Heart right ventricle (tissue), 16 donors: ENCODE measurements at regions of chr2 and their contacts with region 1.

Region 1: DNA sequence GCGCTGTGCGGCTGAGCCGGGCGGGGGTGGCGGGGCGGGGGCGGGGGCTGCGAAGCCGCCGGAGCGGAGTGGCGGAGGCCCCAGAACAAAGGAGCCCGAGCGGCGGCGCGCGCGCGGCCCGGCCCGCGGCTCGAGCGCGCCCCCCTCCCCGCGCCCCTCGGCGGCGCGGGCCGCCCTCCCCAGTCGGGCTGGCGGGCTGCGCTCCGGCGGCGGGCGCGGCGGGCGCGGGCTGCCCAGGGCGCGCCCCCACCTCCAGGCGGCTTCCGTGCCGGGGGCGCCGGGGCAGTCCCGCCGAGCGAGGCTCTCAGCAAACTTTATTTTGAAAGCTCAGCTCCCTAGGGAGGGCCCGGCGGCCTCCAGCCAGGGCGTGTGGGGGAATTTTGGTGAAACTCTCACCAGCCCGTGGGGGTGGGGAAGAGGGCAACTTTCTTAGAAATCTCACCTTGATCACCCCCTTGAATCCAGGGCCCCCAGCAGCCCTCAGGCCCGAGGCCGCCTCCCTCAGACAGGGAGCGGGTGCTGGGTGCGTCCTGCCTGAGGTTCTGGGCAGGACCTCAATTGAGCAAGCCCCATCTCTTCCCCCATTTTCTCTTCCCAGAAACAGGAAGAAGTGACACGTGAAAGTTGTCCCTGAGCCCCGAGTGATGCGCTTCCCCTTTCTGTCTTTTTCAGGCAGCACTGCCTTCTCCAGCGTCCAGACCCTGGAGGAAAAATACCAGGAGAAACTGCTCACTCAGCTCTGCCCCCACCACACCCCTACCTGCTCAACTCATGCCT is 786 bp downstream of the TET3 start:
- DNase-seq: peak; percentile 54 to 65
- ATAC-seq: peak in 6 of 8 donors; percentile 5 to 27 (median 9)
- H3K4me3 ChIP-seq: peak overlapping the region; percentile 34 to 67 (median 61)
- H3K27ac ChIP-seq: peak overlapping the region in 8 of 10 donors; percentile 49 to 95 (median 74)
- H3K4me1 ChIP-seq: peaks cover 12 to 78% (median 66%) of the 10 kb centered on the region in 9 donors
- H3K27me3 ChIP-seq: no peaks in the 10 kb centered on the region
- CTCF ChIP-seq: no peak

Region 2: DNA sequence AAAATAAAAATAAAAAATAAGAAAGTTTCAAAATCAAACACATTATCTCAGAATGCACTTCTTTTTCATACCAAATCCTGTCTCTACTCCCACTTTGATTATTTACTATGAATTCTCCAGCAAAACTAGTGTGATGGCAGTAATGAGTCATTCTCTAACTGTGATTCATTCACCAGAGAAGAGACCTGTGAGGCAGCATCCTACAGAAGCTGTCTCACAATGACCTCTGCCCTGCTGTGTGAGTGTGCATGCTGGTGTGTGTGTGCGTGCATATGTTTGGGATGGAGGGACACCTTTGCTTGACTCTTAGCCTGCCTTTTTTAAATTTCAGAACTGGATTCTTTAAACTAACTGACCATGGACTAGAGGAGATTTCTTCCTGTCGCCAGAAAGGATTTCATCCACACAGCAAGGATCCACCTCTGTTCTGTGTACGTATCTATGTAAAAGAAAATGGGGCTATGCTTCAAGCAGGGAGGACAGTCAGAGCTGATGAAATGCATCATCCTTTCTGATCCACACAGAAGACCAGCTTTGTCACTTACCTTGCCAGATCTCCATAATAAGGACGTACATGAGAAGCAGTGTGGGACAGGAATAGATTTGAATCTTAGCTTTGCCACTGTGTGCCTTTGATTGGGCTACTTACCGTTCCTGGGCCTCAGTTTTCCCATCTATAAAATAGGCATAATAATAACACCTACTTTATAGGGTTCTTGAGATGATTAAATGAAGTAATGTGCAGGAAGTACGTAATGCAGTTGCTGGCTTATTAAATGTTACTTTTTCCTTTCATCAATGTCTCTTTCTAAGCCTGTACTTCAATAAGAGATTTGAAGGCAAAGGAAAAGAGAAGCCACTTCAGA is 125.5 kb before region 1 on chr2:
- intact Hi-C with region 1: loop called in 1 of 10 experiments (anchors 10 kb)
- DNase-seq: no peak
- ATAC-seq: no peak
- H3K4me3 ChIP-seq: no peak overlapping the region
- H3K27ac ChIP-seq: no peak overlapping the region
- H3K4me1 ChIP-seq: no peaks in the 10 kb centered on the region
- H3K27me3 ChIP-seq: no peaks in the 10 kb centered on the region
- CTCF ChIP-seq: no peak

Region 3: GRCh38 chr2:73896362-73897239 is 88.9 kb before region 1 on chr2:
- intact Hi-C with region 1: no loop called
- DNase-seq: peak in 1 of 2 donors; percentile 21
- ATAC-seq: peak in 5 of 8 donors; percentile 42 to 70 (median 52)
- H3K4me3 ChIP-seq: no peak overlapping the region
- H3K27ac ChIP-seq: peak overlapping the region in 2 of 10 donors; percentile 15 to 20
- H3K4me1 ChIP-seq: peaks cover 0 to 13% (median 0%) of the 10 kb centered on the region in 9 donors
- H3K27me3 ChIP-seq: no peaks in the 10 kb centered on the region
- CTCF ChIP-seq: no peak

Region 4: DNA sequence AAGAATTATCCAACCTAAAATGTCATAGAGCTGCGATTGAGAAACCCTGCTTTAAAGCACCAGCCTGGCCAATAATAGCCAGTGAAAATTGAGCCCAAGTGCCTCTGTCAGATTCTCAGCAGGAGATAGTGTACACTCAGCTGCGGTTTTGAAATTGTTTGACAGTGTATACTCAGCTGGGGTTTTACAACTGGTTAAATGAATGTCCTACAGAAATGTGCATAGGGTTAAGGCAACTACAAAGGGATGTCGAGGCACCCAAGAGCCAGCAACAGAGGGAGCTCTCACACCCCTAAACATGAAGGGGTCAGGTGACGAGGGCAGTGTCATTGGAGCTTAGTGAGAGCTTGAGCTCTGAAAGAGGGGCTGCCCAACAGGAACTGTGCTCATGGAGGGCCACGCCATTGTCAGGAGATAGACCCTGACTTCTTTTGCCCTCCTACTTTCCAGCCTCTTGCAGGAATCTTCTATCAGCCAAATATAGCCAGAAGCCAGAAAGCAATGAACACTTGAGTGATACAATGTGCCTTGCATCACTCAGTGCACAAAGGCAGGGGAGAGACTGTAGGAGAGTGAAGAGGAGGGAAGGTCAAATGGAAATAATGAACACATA is 77.5 kb before region 1 on chr2:
- intact Hi-C with region 1: no loop called
- DNase-seq: no peak
- ATAC-seq: peak in 3 of 8 donors; percentile 58 to 75 (median 64)
- H3K4me3 ChIP-seq: no peak overlapping the region
- H3K27ac ChIP-seq: no peak overlapping the region
- H3K4me1 ChIP-seq: peaks cover 0 to 13% (median 0%) of the 10 kb centered on the region in 9 donors
- H3K27me3 ChIP-seq: peaks cover 0 to 4% (median 0%) of the 10 kb centered on the region in 7 donors
- CTCF ChIP-seq: peak in 6 of 9 donors; percentile 28 to 55 (median 38)

Region 5: DNA sequence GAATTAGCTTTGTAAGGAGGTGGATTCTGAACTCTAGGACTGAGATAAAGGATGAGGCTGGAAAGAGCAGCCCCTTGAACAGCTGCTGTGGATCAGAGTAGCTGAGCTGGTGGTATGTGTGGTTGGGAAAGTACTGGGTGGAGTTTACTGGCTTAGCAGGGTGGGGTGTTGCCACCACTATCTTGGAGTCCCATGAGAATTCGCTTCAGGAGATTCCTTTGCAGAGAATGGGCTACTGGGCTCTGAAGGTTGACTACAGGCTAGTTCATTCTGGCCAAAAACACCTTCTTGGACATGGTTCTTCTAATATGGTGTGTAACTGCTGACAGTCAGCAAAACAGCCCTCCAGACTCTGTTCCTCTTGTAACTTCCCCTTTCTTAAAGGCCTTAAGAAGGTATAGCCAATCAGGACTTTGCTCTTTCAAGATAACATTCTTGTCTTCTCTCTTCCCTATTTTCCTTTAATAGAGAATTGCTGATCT is 51.9 kb after region 1 on chr2:
- intact Hi-C with region 1: no loop called
- DNase-seq: no peak
- ATAC-seq: peak; percentile 48 to 76 (median 64)
- H3K4me3 ChIP-seq: peak overlapping the region in 1 of 10 donors; percentile 22
- H3K27ac ChIP-seq: peak overlapping the region in 1 of 10 donors; percentile 83
- H3K4me1 ChIP-seq: peaks cover 0 to 85% (median 22%) of the 10 kb centered on the region in 9 donors
- H3K27me3 ChIP-seq: no peaks in the 10 kb centered on the region
- CTCF ChIP-seq: no peak